ENCODE measurements at regions of chr5 and their contacts with region 1.

Region 1: DNA sequence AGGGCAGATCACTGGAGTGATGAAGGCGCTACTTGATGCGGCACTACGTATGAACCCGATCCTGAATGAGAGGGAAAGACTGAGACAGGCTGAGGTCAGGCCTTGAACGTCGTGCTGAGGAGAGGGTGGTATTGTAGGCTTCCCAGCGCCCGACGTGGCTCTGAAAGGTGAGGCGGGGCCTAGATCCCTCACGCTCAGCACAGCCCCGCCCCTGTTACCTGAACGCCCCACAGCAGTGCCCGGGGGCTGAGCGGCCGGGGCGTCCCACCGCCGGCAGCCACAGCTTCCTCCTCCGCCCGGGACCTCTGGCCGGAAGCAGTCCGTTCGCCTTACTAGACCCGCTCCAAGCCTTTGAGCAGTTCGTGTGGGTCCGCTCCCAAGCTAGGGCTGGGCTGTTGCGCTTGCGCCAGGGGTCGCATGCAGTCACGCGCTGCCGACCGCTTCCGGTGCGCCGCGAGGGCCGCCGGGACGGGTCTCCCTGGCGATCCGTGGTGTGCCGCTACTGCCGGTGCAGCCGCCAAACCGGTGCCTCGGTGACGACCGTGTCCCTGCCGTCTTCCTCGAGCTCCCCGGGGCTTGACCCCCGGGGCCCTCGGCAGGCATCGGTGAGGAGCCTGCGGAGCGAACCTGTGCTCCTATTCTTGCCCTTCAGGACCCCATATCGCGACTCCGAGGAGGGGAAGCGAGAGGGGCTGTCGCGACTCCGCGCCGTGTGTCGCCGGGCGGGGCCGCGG is at the starts of genes HMGXB3 and TIGD6:
- DNase-seq: peak; percentile 94
- ATAC-seq: peak; percentile 97
- H3K4me3 ChIP-seq: peak within 1 kb of the TSS; percentile 86 to 91 (median 89)
- H3K27ac ChIP-seq: peak within 1 kb of the TSS; percentile 87
- H3K4me1 ChIP-seq: peaks cover 32% of the 10 kb centered on the region
- H3K27me3 ChIP-seq: no peaks in the 10 kb centered on the region; a peak in 1 of 5 replicates
- CTCF ChIP-seq: peak; percentile 43
- EP300 ChIP-seq: no peak
- POLR2A ChIP-seq: peak; percentile 84 to 85
- RAD21 ChIP-seq: peak; percentile 35; the same call in 1 of the 2 replicates
- total RNA-seq, gene HMGXB3: 20.0 and 23.8 TPM in 2 replicates
- total RNA-seq, gene TIGD6: 2.1 TPM in 2 replicates

Region 2: DNA sequence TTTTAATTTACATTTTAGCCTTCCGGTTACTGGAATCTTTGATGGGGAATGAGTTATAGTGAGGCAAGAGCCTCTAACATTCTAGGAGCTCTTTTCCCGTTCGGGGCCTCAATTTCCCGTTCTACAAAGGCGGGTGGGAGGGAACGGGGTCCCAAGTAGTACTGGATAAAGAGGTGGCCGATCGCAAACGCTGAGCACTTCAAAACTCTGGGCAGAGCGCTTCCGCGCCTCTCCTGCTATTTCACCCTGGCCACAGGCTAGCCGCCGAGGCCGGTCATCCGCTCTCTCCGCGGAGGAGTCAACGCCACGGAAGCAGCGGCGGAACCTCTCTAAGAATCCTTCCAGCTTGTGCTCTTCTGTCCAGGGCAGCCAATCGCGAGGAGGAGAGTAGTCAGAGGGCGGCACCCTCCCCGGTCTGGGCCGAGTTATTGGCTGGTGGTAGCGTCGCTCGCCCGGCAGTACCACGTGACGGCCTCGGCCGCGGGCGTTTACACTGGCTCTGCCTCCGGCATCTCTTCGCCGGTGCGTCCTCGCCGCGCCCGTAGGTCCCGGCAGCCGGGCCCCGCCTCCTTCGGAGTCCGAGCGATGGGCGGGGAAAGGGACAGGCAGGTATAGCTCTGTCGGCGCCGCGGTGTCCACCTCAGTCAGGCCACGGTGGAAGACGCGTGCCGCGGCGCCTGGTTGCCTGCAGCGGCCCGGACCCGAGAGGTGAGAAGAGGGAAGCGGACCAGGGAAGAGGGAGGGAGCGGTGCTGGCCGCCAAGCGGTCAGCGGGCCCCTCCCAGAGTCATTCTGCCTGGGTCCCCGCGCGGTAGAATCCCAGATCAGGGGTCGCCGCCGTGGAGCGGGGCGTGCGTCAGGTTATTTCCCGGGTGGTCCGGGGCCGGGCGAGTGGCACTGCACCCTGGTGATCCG is 39.9 kb before region 1 on chr5 and contains the start of gene SLC26A2:
- CTCF ChIA-PET with region 1: no interaction called
- POLR2A ChIA-PET with region 1: interaction called, 17 read pairs
- in situ Hi-C with region 1: no loop called
- intact Hi-C with region 1: no loop called
- DNase-seq: peak; percentile 92
- ATAC-seq: peak; percentile 99
- H3K4me3 ChIP-seq: peak within 1 kb of the TSS; percentile 51 to 77 (median 69)
- H3K27ac ChIP-seq: peak within 1 kb of the TSS; percentile 52
- H3K4me1 ChIP-seq: peaks cover 50% of the 10 kb centered on the region
- H3K27me3 ChIP-seq: no peaks in the 10 kb centered on the region
- CTCF ChIP-seq: peak; percentile 17; the same call in 1 of the 2 replicates
- EP300 ChIP-seq: no peak
- POLR2A ChIP-seq: peak; percentile 85 to 91
- RAD21 ChIP-seq: peak; percentile 48; the same call in 1 of the 2 replicates
- total RNA-seq, gene SLC26A2: 6.3 and 7.9 TPM in 2 replicates

Region 3: DNA sequence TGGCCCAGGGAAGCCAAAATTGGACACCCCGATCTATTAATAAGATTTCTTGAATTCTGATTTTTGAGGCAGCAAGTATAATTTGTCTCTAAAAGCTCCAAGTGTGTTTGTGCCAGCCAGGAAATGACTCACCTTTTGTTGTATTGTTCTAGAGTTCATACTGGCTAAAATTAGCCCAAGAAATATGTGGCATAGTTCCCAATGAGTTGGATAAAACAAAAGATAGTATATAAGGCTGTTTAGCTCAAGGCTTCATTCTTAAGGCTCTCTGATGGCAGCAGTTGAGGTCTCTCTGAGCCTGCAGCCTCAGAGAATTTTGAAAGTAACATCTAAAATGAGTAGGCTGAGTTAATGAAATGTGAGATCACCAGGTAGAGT is 21.7 kb after region 1 on chr5:
- CTCF ChIA-PET with region 1: no interaction called
- POLR2A ChIA-PET with region 1: interaction called, 35 read pairs
- in situ Hi-C with region 1: no loop called
- intact Hi-C with region 1: loop called (anchors 1 kb)
- DNase-seq: no peak
- ATAC-seq: no peak
- H3K4me3 ChIP-seq: no peak overlapping the region
- H3K27ac ChIP-seq: peak overlapping the region; percentile 28
- H3K4me1 ChIP-seq: peaks cover 50% of the 10 kb centered on the region
- H3K27me3 ChIP-seq: no peaks in the 10 kb centered on the region
- CTCF ChIP-seq: no peak
- EP300 ChIP-seq: no peak; a peak in 1 of 4 replicates
- POLR2A ChIP-seq: no peak
- RAD21 ChIP-seq: no peak

Region 4: GRCh38 chr5:150044329-150044681 is 43.9 kb after region 1 on chr5:
- CTCF ChIA-PET with region 1: no interaction called
- POLR2A ChIA-PET with region 1: no interaction called
- in situ Hi-C with region 1: no loop called
- intact Hi-C with region 1: loop called (anchors 2 kb)
- DNase-seq: no peak
- ATAC-seq: no peak
- H3K4me3 ChIP-seq: no peak overlapping the region
- H3K27ac ChIP-seq: no peak overlapping the region
- H3K4me1 ChIP-seq: no peaks in the 10 kb centered on the region
- H3K27me3 ChIP-seq: no peaks in the 10 kb centered on the region
- CTCF ChIP-seq: no peak
- EP300 ChIP-seq: no peak
- POLR2A ChIP-seq: no peak
- RAD21 ChIP-seq: no peak

Measured in HepG2 (cell line).